Aorta (tissue), 5 donors: ENCODE measurements at regions of chr9 and their contacts with region 1.

Region 1: GRCh38 chr9:128103589-128103962 is 24.0 kb downstream of the PTGES2 start:
- DNase-seq: peak in 1 of 2 donors; percentile 66
- ATAC-seq: no peak
- H3K4me3 ChIP-seq: no peak overlapping the region
- H3K27ac ChIP-seq: no peak overlapping the region
- H3K4me1 ChIP-seq: no peaks in the 10 kb centered on the region
- H3K27me3 ChIP-seq: no peaks in the 10 kb centered on the region

Region 2: GRCh38 chr9:128061275-128061960 is 42.2 kb before region 1 on chr9:
- intact Hi-C with region 1: loop called in 1 of 2 experiments (anchors 5 kb)
- DNase-seq: no peak
- ATAC-seq: no peak
- H3K4me3 ChIP-seq: no peak overlapping the region
- H3K27ac ChIP-seq: no peak overlapping the region
- H3K4me1 ChIP-seq: no peaks in the 10 kb centered on the region
- H3K27me3 ChIP-seq: no peaks in the 10 kb centered on the region